Activated CD4-positive, alpha-beta memory T cell treated with anti-CD3 and anti-CD28 coated beads, Interleukin-2, amount 10 ng/mL, durations not matched to agents 7 days and 5 days (primary cell): ENCODE measurements at regions of chr1 and their contacts with region 1.

Region 1: DNA sequence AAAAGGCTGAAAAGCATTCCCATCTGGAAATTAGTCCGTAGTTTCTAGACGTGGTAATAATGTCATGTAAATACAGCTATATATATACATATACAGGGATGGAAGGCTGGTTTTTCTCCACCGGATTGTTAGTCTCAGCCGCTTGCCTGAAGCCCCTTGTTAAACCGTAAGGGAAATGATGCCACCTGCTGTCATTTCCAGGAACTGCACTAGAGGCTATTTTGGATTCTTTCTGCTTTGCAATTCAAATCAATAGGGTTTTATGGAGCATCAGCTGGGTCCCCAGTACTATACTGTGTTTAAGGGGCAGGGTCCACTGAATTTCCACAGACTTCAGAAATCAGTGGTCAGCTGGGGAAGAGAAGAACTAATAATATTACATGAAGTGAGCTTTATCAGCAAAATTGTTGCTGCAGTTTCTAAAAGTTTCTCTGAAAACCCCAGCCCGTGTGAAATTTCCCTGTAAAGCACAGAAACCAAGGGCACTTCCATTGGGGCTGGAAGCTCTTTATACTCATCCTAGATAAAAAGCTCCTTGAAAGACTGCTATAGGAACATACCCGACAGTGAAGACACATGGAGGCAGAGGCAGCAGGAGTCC is 33.8 kb upstream of the MPZL1 start:
- DNase-seq: peak; percentile 79
- H3K4me3 Mint-ChIP-seq: no peak overlapping the region
- H3K27ac Mint-ChIP-seq: peak overlapping the region; percentile 30
- H3K4me1 Mint-ChIP-seq: peaks cover 13% of the 10 kb centered on the region
- H3K27me3 Mint-ChIP-seq: no peaks in the 10 kb centered on the region

Region 2: DNA sequence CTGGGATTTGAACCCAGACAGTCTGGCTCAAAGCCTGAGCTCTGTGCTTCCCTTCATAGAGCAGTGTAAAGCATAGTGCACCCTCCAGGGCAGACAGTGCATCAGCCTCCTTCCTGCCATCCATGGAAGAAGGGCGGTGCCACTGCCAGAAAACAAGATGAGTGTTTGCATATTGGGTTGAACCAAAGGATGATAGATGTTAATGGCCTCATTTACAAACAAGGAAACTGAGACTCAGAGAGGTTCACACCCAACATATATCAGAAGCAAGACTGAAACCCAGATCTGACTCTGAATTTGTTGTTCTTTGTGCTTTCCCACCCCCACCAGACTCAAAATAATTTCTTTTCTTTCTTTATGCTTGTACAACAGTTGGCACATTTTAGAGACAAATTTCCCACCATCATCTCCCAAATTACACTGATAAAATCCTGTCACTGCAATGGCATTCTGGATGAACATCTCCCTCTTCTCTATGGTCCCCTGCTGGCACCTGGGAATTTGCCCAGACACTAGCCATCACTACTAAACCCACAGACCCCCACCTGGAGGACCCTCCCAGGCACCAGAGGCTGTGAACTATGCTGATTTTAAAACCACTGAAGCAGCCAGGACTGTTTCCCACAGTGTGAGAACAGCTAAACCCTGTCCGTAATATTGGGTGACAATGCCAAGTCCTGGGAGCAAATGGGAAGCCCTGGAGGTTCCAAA is 11.7 kb before region 1 on chr1:
- CTCF ChIA-PET with region 1: interaction called, 12 read pairs
- POLR2A ChIA-PET with region 1: interaction called, 3 read pairs
- DNase-seq: no peak
- H3K4me3 Mint-ChIP-seq: no peak overlapping the region
- H3K27ac Mint-ChIP-seq: no peak overlapping the region
- H3K4me1 Mint-ChIP-seq: peaks cover 46% of the 10 kb centered on the region
- H3K27me3 Mint-ChIP-seq: no peaks in the 10 kb centered on the region

Region 3: DNA sequence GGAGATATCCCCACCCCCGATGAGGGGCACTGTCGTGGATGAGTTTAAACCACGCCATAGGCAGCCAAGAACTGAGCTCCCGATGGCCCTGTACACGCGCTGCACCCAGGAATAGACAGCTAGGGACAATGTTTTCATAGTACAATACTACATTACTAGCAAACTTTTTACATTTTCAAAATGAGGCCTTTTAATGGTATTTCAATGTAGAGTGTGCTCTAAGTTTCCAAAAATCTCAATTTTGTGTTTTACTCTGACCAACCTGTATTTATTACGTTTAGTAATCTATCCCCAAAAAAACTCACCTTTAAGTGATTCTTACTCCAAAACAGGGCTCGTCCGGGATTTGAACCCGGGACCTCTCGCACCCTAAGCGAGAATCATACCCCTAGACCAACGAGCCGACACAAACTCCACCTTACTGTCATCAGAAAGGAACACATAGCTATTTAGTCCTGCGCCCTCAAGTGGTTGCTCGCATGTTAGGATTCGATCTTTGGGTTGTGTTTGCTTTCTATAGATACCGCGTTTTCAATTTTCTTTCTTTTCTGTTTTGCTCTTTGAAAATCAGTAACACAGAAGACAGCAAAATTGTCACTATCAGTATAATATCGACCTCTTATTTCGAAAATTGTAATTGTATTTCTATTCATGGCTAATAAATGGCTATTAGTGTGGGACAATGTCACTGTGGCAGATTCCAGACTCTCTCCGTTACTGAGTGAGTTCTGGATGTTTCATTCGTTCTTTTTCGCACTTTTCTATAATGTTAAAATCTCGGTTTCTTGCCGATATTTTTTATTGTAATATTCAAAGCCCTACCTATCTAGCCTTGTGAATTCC is 27.4 kb after region 1 on chr1:
- CTCF ChIA-PET with region 1: interaction called, 14 read pairs
- POLR2A ChIA-PET with region 1: interaction called, 3 read pairs
- DNase-seq: peak; percentile 92
- H3K4me3 Mint-ChIP-seq: peak overlapping the region; percentile 84
- H3K27ac Mint-ChIP-seq: peak overlapping the region; percentile 92
- H3K4me1 Mint-ChIP-seq: peaks cover 46% of the 10 kb centered on the region
- H3K27me3 Mint-ChIP-seq: peaks cover 7% of the 10 kb centered on the region

Region 4: DNA sequence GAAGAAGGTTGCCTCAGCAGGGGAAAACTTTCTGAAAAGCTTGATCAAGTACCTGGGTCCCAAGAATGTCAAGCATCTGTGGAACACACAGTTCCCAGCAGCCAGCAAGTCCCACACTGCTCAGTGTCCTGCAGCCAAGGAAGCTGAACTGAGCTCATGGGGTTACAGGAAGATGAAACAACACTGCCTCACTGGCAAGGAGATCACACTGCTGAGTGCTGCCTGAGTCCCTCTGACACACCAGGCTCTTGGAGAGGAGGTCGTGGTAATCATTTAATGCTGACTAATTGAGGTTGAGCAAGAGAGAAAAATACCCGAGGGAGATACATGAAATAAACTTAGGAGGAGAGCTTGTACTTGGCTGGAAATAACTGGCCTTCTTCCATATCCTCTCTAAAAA is 109.0 kb after region 1 on chr1:
- CTCF ChIA-PET with region 1: no interaction called
- POLR2A ChIA-PET with region 1: no interaction called
- DNase-seq: no peak
- H3K4me3 Mint-ChIP-seq: no peak overlapping the region
- H3K27ac Mint-ChIP-seq: no peak overlapping the region
- H3K4me1 Mint-ChIP-seq: peaks cover 10% of the 10 kb centered on the region
- H3K27me3 Mint-ChIP-seq: no peaks in the 10 kb centered on the region